Psoas muscle (tissue), 8 donors: ENCODE measurements at regions of chr14 and their contacts with region 1.

Region 1: GRCh38 chr14:34982417-34983147 is at the start of gene SRP54:
- DNase-seq: peak; percentile 98 to 100
- ATAC-seq: peak; percentile 97 to 98 (median 98)
- H3K4me3 ChIP-seq: peak within 1 kb of the TSS; percentile 83
- H3K27ac ChIP-seq: peak within 1 kb of the TSS; percentile 99
- H3K4me1 ChIP-seq: peaks cover 32% of the 10 kb centered on the region
- H3K27me3 ChIP-seq: no peaks in the 10 kb centered on the region
- CTCF ChIP-seq: peak; percentile 3
- total RNA-seq, gene SRP54: 30.6 to 39.6 (median 34.6) TPM

Region 2: DNA sequence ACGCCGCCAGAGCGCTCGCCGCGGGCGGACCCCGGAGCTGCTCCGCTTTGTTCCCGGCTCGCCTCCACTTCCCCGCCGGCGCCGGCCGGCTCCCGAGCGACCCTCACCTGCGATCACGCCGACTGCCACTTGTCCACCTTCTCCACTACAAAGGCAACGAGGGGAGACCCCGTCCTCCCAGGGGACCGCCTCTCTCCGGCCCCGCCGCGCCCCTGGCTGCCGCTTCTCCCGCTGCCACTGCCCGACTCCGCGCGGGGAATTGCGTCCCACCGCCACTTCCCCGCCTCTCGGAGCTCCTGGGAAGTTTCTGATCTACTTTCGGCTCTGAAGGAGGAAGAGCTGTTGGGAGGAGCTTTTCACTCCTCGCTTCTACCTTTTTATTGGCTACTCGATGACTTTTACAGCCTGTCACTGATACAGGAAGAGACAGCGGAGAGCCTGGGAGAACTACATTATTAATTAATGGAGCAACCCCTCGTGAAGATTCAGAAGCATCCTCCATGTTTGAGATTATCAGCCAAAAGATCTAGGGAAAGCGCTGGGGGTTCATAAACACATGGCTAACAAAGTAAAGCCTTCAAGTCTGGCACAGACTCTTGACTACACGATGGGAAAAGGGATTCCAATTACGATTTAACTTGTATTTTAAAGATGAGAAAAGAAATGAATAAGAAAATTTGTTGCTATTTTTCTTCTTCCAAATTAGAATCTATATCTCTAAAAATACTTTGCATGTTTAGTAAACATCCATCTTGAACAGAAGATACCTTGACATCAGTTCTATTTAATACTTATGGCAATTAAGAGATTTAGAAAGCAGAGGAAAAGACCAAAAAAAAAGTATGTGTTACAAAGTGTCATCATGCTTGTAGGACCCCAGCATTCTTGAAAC is 107.3 kb before region 1 on chr14 and contains the start of gene BAZ1A:
- intact Hi-C with region 1: loop called (anchors 2 kb)
- DNase-seq: peak; percentile 64 to 80
- ATAC-seq: peak; percentile 38 to 58 (median 56)
- H3K4me3 ChIP-seq: peak within 1 kb of the TSS; percentile 75
- H3K27ac ChIP-seq: peak within 1 kb of the TSS; percentile 99
- H3K4me1 ChIP-seq: peaks cover 12% of the 10 kb centered on the region
- H3K27me3 ChIP-seq: no peaks in the 10 kb centered on the region
- CTCF ChIP-seq: peak; percentile 19
- total RNA-seq, gene BAZ1A: 7.5 to 28.3 (median 15.5) TPM